OCI-LY7 (cell line): ENCODE measurements at regions of chr22 and their contacts with region 1.

Region 1: DNA sequence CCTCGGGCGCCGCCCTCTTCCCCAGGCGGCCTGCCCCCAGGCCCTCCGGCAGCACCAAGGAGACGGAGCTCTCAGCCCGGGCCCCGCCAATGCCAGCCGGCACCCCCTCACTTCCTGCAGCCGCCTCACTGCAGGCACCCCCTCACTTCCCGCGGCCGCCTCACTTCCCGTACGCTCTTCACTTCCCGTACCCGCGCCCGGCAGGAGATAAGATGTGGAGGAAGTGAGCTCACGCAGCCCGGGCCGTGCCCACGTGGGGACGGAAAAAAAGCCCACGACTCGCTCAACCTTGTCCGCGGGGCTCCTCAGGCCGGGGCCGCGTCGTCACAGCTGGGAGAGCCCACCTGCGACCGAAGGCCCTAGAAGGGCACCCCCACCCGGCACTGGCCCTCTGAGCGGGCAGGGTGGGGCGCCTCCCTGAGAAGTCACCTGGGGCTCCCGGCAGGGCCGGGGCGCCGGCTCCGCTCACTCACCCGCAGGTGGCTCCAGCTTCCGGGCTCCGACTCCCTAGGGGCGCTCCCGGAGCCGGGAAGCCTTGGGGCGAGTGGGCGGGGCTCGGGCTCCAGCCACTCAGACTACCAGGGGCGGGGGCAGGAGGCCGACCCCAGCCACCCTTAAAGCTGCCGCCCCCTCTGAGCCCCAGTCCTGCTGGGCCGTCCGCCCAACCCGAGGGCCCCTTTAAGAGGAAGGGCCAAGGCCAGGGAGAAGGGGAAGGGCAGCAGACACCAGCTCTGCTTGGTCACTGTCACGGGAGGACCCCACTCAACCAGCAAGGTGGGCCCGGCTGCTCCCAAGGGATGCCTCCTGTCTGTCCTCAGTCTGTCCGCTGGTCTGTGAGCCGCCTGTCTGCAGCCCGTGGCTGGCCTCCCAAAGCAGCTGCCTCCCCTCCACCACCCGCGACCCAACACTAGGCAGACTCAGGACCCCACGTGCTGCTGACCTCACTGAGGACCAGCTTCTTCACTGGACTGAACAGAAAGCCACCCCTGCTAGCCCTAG is 31.4 kb downstream of the PISD start:
- DNase-seq: peak; percentile 96
- H3K4me3 ChIP-seq: peak overlapping the region; percentile 73
- H3K27ac ChIP-seq: peak overlapping the region; percentile 93
- H3K4me1 ChIP-seq: peaks cover 82% of the 10 kb centered on the region
- CTCF ChIP-seq: no peak

Region 2: DNA sequence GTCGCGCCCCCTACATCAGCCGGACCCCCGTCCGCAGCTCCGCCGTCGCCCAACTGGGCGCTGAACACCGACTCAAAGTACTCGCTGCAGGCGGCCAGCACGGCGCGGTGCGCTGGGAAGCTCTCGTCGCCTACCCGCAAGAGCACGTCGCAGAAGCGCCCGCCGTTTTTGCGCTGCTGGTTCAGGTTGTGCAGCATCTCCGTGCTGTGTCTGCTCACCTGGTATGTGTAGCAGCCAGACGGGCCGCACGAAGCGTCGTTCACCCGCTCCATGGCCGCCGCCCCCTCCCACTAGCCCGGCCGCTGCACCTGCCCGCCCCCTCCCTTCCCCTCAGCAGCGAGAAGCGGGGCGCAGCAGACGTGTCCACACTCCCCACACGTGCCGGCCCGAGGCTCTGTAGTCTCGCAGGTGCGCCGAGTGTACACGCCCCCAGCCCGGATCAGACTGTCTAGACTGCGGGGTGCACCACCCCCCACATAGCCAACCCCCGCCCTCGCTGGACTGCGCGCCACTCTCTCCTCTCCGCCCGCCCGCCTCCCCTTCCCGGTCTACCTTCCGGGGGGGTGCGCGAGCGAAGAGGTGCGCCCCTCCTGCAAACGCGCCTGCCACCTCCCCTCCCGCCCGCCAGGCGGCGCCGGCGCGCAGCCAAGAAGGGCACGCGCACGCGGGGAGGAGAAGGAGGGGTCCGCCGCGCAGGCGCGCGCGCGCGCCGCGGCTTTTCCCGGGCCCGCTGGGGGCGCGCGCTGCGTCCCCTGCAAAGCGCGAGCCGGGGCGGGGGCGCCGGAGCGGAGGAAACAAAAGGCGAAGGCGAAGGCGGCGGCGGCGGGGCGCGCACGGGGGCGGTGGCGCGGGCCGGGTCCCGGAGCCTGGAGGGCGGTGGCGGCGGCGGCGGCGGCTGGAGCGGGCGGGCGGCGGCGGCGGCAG is 285.0 kb before region 1 on chr22:
- CTCF ChIA-PET with region 1: no interaction called
- POLR2A ChIA-PET with region 1: no interaction called
- intact Hi-C with region 1: loop called (anchors 1 kb)
- DNase-seq: peak; percentile 96
- H3K4me3 ChIP-seq: peak overlapping the region; percentile 84
- H3K27ac ChIP-seq: peak overlapping the region; percentile 76
- H3K4me1 ChIP-seq: peaks cover 30% of the 10 kb centered on the region
- CTCF ChIP-seq: peak; percentile 80

Region 3: DNA sequence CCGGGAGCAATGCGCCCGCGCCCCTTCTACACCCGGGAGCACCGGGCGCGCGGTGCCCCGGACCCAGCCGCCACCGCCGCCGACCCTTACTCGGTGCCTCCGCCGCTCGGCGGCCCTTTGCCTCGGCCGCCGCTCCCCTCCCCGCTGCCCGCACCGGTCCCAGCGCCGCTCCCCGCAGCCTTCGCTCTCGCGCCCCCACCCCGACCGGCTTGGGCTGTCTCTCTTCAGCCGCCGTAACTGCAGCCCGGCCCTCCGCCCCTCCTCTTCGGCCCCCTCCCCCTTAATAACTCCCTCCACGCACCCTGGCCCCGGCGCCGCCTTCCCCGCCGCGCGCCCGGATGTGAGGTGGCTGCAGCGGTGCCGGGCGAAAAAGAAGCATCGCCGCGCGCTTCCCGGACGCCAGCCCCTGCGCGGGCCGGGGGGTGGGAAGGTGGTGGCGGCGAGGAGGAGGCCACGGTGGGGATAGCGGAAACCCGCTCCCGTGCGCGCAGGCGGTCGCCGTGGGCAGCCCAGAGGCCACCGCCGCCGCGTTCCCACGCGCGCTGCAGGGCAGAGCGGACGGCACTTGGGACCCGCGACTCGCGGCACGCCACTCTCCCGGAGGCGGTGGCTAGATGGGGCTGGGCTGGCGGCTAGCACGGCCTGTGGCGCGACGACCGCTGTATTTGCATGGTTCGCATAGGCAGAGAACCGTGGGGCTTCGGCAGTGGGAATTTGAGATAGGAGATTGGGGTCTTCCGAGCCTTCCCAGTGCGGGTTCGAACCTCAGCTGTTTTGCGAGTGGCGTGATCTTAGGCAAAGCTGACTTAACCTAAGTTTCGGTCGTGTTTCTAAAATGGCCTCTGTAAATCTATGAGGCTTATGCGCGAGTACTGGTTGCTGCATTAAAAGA is 140.8 kb before region 1 on chr22 and contains the start of gene EIF4ENIF1:
- CTCF ChIA-PET with region 1: interaction called, 3 read pairs
- POLR2A ChIA-PET with region 1: interaction called, 5 read pairs
- intact Hi-C with region 1: loop called (anchors 1 kb)
- DNase-seq: peak; percentile 87
- H3K4me3 ChIP-seq: peak within 1 kb of the TSS; percentile 79
- H3K27ac ChIP-seq: peak within 1 kb of the TSS; percentile 97
- H3K4me1 ChIP-seq: peaks cover 50% of the 10 kb centered on the region
- CTCF ChIP-seq: no peak
- total RNA-seq, gene EIF4ENIF1: 12.5 and 18.1 TPM in 2 replicates

Region 4: DNA sequence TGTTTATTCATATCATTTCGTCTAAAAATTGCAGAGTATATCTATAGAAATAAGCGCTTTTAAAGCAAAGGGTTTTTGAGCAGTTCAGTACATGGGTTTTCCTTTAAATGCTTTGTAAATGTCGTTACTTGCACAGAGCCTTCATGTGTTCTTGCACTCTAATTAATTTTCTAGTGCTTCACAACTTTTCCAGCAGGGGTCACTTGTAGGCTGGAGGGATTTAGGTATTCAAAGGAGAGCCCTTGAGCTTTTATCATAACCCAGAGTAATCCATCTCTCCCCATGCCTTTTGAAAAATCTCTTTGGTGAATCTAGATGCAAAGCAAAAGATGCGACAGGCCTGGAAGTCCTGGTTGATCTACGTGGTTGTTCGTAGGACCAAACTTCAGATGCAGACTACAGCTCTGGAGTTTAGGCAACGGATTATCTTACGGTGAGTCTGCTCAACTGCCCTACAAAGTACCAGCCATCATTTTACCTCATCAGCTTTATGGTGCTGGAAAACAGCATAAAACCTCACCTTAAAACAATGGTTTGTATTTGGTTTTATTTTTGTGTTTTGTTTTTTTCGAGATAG is 73.9 kb before region 1 on chr22:
- CTCF ChIA-PET with region 1: no interaction called
- POLR2A ChIA-PET with region 1: interaction called, 5 read pairs
- intact Hi-C with region 1: loop called (anchors 1 kb)
- DNase-seq: peak; percentile 38
- H3K4me3 ChIP-seq: no peak overlapping the region
- H3K27ac ChIP-seq: no peak overlapping the region
- H3K4me1 ChIP-seq: peaks cover 21% of the 10 kb centered on the region
- CTCF ChIP-seq: peak; percentile 83

Region 5: GRCh38 chr22:31730344-31730711 is 99.7 kb after region 1 on chr22:
- CTCF ChIA-PET with region 1: no interaction called
- POLR2A ChIA-PET with region 1: no interaction called
- intact Hi-C with region 1: no loop called
- DNase-seq: peak; percentile 13
- H3K4me3 ChIP-seq: no peak overlapping the region
- H3K27ac ChIP-seq: no peak overlapping the region
- H3K4me1 ChIP-seq: no peaks in the 10 kb centered on the region
- CTCF ChIP-seq: peak; percentile 57

Region 6: DNA sequence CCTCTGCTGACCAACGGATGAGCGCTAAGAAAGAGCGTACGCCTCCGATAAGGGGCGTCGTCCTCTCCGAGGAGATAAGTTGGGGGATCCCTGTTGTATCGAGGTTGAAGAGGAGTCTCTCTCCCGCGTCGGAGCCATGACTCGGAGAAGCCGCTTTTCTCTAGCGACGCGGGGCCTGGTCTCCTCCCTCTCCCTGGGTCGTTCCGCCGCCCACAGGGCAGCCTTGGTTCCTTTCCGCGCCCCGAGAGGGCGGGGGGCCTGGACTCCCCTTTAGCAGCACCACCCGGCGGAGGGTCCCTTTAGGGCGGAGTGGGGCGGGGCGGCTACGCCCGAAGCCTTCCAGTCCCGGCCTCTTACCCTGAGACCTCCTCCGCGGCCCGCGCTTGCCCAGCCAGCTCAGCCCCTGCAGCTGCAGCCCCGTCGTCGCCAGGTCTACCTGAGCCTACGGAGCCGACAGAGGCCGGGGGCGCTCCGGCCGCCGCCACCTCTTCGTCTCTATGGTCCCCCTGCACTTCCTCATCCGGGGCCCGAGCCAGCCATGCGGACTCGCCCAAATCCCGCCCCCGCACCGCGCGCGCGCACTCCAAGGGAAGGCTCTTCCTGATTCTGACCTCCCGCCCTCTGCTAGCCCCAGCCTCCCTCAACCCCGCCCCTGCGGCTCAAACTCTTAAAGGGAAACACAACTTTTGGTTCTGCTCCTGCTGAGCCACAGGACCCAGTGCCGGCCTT is 119.2 kb after region 1 on chr22 and contains the start of gene PRR14L:
- CTCF ChIA-PET with region 1: no interaction called
- POLR2A ChIA-PET with region 1: no interaction called
- intact Hi-C with region 1: loop called (anchors 5 kb)
- DNase-seq: peak; percentile 97
- H3K4me3 ChIP-seq: peak within 1 kb of the TSS; percentile 95
- H3K27ac ChIP-seq: peak within 1 kb of the TSS; percentile 90
- H3K4me1 ChIP-seq: peaks cover 43% of the 10 kb centered on the region
- CTCF ChIP-seq: peak; percentile 45; the same call in 1 of the 2 replicates
- total RNA-seq, gene PRR14L: 15.9 and 21.9 TPM in 2 replicates